T-cell (primary cell): ENCODE measurements at regions of chr20 and their contacts with region 1.

Region 1: DNA sequence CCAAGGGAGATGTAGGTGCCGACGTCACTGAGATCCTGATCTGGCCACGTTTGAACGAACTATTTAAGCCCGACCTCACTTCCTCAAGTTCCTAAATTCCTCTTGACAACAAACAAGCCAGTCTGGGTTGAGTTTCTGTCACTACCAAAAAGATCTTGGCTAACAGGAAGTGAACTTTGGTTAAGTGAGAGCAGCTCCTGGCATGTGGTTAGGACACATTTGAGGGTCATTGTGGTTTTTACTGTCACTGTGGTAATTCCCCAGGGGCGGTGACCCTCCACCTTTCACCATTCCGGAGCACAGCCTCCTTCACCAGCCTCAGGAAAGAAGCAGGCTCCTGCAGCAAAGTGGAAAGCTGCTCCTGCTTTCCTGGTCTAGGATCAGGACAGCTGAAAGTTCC is 43.1 kb upstream of the ZNF831 start:
- DNase-seq: peak in 27 of 35 experiments; percentile 13 to 71 (median 36)
- ATAC-seq: peak in 3 of 4 experiments; percentile 13 to 17 (median 14)
- H3K4me3 ChIP-seq: no peak overlapping the region
- H3K4me3 Mint-ChIP-seq: peak overlapping the region in 1 of 3 donors; percentile 84
- H3K27ac ChIP-seq: peak overlapping the region; percentile 89
- H3K27ac Mint-ChIP-seq: peak overlapping the region; percentile 99 to 100
- H3K4me1 ChIP-seq: peaks cover 68 to 76% of the 10 kb centered on the region in 2 experiments
- H3K4me1 Mint-ChIP-seq: peaks cover 86 to 95% (median 91%) of the 10 kb centered on the region in 3 donors
- H3K27me3 ChIP-seq: no peaks in the 10 kb centered on the region
- H3K27me3 Mint-ChIP-seq: no peaks in the 10 kb centered on the region

Region 2: DNA sequence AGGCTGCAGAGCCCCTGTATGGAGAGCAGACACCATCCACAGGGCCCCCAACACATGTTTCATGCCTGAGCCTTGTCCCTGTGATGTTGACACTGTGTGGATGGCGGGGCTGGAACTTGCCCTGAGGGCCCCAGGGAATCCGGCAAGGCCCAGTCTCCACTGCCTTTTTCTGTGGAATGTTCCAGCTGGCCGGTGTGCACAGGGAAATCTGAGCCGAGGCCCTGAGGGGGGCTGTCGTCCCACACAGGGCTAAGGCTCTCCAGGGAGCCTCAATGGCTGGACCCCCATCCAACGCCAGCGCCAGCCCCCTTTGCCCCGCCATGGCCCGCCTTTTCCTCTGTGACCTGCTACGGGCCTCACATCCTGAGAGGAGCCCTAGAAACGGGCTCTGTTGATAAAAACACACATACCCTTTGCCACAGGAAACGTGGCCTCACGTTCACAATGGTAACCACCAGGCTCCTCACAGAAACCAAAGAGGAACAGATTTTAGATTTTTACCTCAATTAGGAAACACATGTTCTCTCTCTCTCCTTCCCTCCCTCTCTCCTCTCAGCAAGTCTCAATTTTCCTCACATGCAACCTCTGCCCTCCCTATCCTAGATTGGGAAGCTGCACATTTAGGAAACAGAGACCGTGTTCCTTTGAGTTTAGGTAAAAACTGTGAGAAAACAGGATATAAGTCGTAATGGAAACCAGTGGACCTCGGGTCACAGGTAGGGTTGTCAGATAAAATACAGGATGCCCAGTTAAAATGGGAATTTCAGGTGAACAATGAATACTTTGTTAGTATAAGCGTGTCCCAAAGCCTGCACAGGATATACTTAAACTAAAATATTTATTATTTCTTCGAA is 29.4 kb after region 1 on chr20:
- CTCF ChIA-PET with region 1: interaction called in 1 of 2 experiments, 15 read pairs
- POLR2A ChIA-PET with region 1: interaction called, 9 to 11 read pairs
- DNase-seq: peak; percentile 43 to 92 (median 79)
- ATAC-seq: peak; percentile 84 to 89 (median 87)
- H3K4me3 ChIP-seq: peak overlapping the region in 1 of 2 donors; percentile 7
- H3K4me3 Mint-ChIP-seq: peak overlapping the region; percentile 59 to 69 (median 67)
- H3K27ac ChIP-seq: peak overlapping the region; percentile 96
- H3K27ac Mint-ChIP-seq: peak overlapping the region; percentile 98 to 99
- H3K4me1 ChIP-seq: peaks cover 67 to 98% of the 10 kb centered on the region in 2 experiments
- H3K4me1 Mint-ChIP-seq: peaks cover 96 to 98% (median 97%) of the 10 kb centered on the region in 3 donors
- H3K27me3 ChIP-seq: no peaks in the 10 kb centered on the region
- H3K27me3 Mint-ChIP-seq: no peaks in the 10 kb centered on the region

Region 3: GRCh38 chr20:59207742-59208357 is 87.4 kb after region 1 on chr20:
- CTCF ChIA-PET with region 1: interaction called, 6 to 12 read pairs
- POLR2A ChIA-PET with region 1: interaction called in 1 of 2 experiments, 4 read pairs
- DNase-seq: peak; percentile 61 to 90 (median 80)
- ATAC-seq: peak; percentile 90 to 98 (median 92)
- H3K4me3 ChIP-seq: no peak overlapping the region
- H3K4me3 Mint-ChIP-seq: peak overlapping the region in 1 of 3 donors; percentile 56
- H3K27ac ChIP-seq: peak overlapping the region; percentile 30
- H3K27ac Mint-ChIP-seq: peak overlapping the region; percentile 73 to 88
- H3K4me1 ChIP-seq: peaks cover 18 to 31% of the 10 kb centered on the region in 2 experiments
- H3K4me1 Mint-ChIP-seq: peaks cover 36 to 41% (median 41%) of the 10 kb centered on the region in 3 donors
- H3K27me3 ChIP-seq: no peaks in the 10 kb centered on the region
- H3K27me3 Mint-ChIP-seq: no peaks in the 10 kb centered on the region